Mammary epithelial cell (primary cell): ENCODE measurements at regions of chr19 and their contacts with region 1.

Region 1: GRCh38 chr19:42244347-42245220 is 2.2 kb upstream of the GSK3A start:
- DNase-seq: peak; percentile 90
- H3K4me3 ChIP-seq: peak overlapping the region; percentile 60 to 77 (median 72)
- H3K27ac ChIP-seq: peak overlapping the region; percentile 26
- H3K4me1 ChIP-seq: peaks cover 23% of the 10 kb centered on the region
- H3K27me3 ChIP-seq: no peaks in the 10 kb centered on the region
- CTCF ChIP-seq: peak; percentile 45 to 68

Region 2: DNA sequence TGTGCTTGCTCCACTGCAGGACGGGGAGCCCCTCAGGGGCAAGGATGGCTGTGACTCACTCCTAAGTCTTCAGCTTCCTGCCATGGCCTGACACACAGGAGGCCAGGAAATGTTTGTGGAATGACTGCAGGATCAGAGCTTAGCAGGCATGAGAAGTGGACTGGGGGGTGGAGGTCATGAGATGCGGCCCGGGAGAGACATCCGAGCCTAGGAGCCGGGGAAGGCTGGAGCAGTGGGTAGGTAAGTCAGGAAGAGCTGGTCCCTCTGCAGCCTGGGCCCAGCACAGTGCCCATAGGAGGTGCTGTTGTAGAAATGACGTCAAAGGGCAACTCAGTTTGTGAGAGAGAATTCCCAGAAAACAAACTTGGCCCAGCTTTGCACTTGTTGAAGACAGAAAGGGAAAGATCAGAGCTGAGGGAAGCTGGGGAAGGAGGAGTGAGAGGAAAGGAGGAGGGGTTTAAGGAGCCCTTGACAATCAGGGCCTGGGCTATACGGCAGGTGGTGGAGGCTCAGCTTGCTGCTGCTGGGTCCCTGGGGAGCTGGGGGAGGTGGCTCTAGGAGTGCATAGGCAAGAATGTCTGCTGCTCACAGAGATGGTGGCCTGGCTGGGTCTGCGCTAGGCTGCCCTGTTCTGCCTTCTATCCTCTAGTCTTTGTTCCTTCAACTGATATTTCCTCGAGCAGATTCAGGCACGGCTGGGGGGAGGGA is 130.8 kb before region 1 on chr19:
- CTCF ChIA-PET with region 1: interaction called, 3 read pairs
- dilution Hi-C with region 1: no loop called
- in situ Hi-C with region 1: loop called in 1 of 2 experiments (anchors 5 kb)
- intact Hi-C with region 1: loop called (anchors 1 kb)
- DNase-seq: peak; percentile 96
- H3K4me3 ChIP-seq: peak overlapping the region in 1 of 3 experiments; percentile 21
- H3K27ac ChIP-seq: peak overlapping the region; percentile 87
- H3K4me1 ChIP-seq: peaks cover 48% of the 10 kb centered on the region
- H3K27me3 ChIP-seq: no peaks in the 10 kb centered on the region
- CTCF ChIP-seq: peak; percentile 39 to 41

Region 3: GRCh38 chr19:42184401-42184861 is 60.2 kb before region 1 on chr19:
- CTCF ChIA-PET with region 1: no interaction called
- dilution Hi-C with region 1: loop called (anchors 5 kb)
- in situ Hi-C with region 1: no loop called
- intact Hi-C with region 1: loop called (anchors 1 kb)
- DNase-seq: peak; percentile 62
- H3K4me3 ChIP-seq: no peak overlapping the region
- H3K27ac ChIP-seq: no peak overlapping the region
- H3K4me1 ChIP-seq: peaks cover 11% of the 10 kb centered on the region
- H3K27me3 ChIP-seq: no peaks in the 10 kb centered on the region
- CTCF ChIP-seq: peak; percentile 93 to 95

Region 4: DNA sequence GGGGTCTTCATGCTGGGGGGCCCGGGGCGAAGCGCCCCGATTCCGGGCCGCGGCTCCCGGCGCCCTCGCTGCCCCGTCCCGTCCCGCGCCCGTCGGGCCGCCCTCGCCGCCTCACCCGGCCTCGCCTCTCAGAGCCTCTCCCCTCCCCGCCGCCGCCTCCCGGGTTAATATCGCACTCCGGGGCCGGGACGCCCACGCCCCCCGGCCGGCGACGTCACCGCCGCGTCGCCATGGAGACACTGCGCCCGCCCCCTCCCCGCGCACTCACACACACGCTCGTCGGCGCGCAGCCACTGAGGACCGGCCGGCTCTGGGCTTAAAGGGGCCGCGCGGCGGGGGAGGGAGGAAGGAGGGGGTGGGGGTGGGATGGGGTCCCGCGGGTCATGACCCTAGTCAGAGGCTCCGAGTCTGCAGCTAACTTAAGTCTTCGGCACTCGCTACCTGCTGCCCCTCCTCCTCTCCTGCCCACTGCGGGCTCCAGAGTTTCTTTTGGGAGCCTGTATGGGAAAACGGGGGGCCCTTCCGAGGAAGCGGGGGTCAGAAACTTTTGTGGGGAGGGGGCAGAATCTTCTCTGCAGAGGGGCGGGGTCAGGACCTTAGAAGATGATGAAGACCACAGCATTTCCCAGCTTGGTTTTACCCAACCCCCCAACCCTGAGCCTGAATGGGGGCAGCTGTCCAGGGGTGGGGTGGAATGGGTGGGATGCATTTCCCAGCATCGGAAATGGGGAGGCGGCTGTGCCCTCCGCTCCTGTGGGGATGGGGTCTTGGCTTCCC is 10.6 kb after region 1 on chr19 and contains the start of gene ERF:
- CTCF ChIA-PET with region 1: no interaction called
- dilution Hi-C with region 1: no loop called
- in situ Hi-C with region 1: no loop called
- intact Hi-C with region 1: loop called (anchors 1 kb)
- DNase-seq: peak; percentile 91
- H3K4me3 ChIP-seq: peak within 1 kb of the TSS; percentile 95 to 99 (median 98)
- H3K27ac ChIP-seq: peak within 1 kb of the TSS; percentile 91
- H3K4me1 ChIP-seq: peaks cover 32% of the 10 kb centered on the region
- H3K27me3 ChIP-seq: no peaks in the 10 kb centered on the region
- CTCF ChIP-seq: no peak
- total RNA-seq, gene ERF: 101 to 139 TPM

Region 5: GRCh38 chr19:42283143-42284065 is 38.8 kb after region 1 on chr19:
- CTCF ChIA-PET with region 1: interaction called, 6 read pairs
- dilution Hi-C with region 1: loop called (anchors 5 kb)
- in situ Hi-C with region 1: loop called (anchors 5 kb)
- intact Hi-C with region 1: loop called (anchors 1 kb)
- DNase-seq: peak; percentile 91
- H3K4me3 ChIP-seq: peak overlapping the region in 2 of 3 experiments; percentile 44 to 48
- H3K27ac ChIP-seq: peak overlapping the region; percentile 43
- H3K4me1 ChIP-seq: peaks cover 56% of the 10 kb centered on the region
- H3K27me3 ChIP-seq: no peaks in the 10 kb centered on the region
- CTCF ChIP-seq: no peak

Region 6: GRCh38 chr19:42396381-42397262 is 152.0 kb after region 1 on chr19:
- CTCF ChIA-PET with region 1: no interaction called
- dilution Hi-C with region 1: no loop called
- in situ Hi-C with region 1: no loop called
- intact Hi-C with region 1: loop called (anchors 2 kb)
- DNase-seq: peak; percentile 99
- H3K4me3 ChIP-seq: peak overlapping the region; percentile 37 to 57 (median 53)
- H3K27ac ChIP-seq: peak overlapping the region; percentile 95
- H3K4me1 ChIP-seq: peaks cover 14% of the 10 kb centered on the region
- H3K27me3 ChIP-seq: no peaks in the 10 kb centered on the region
- CTCF ChIP-seq: no peak